B cell (primary cell): ENCODE measurements at regions of chr2 and their contacts with region 1.

Region 1: DNA sequence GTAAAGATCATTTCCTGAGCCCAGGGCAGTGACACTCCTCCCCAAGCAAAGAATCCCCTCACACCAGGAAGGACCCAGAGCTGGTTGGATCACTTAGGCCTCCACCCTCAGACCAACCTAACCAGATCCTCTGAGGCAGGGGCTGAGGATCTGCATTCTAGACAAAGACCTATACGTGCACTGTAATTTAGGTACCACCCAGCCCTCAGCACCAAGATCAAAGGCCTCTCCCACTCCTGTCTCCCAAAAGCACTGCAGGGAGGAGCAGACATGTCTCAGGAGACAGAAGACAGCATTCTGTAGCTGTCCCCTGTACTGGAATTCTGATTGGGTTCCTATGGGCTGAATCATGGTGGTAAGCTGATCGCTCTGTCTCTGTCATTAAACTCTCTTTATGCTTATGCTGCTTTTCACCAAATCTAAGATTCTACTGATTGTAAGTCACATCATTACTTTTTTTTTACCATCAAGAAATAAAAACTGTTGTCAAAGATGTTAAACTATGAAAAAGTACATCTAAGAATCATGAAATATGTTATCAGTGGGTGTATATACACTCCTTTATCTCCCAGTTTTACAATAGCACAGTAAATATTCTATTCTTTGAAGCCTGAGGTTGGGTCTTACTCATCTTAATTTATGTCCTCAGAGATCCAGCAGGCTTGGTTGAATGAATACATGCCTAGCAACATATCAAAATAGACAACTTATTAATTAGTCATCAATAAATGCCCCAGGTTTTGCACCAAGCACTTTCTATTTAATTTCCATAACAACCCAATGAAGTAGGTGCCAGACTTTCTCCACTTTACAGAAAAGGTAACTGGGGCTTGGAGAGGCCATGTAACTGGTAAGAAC is 28.3 kb downstream of the MCFD2 start:
- DNase-seq: no peak
- ATAC-seq: no peak
- H3K4me3 ChIP-seq: no peak overlapping the region
- H3K4me3 Mint-ChIP-seq: no peak overlapping the region
- H3K27ac ChIP-seq: no peak overlapping the region
- H3K27ac Mint-ChIP-seq: no peak overlapping the region
- H3K4me1 ChIP-seq: no peaks in the 10 kb centered on the region
- H3K4me1 Mint-ChIP-seq: no peaks in the 10 kb centered on the region
- H3K27me3 ChIP-seq: peaks cover 0 to 2% (median 0%) of the 10 kb centered on the region in 4 experiments
- H3K27me3 Mint-ChIP-seq: peaks cover 4% of the 10 kb centered on the region
- CTCF ChIP-seq: no peak

Region 2: GRCh38 chr2:44981136-44982108 is 1905.8 kb before region 1 on chr2:
- CTCF ChIA-PET with region 1: no interaction called
- POLR2A ChIA-PET with region 1: no interaction called
- intact Hi-C with region 1: loop called (anchors 5 kb)
- DNase-seq: peak; percentile 77
- ATAC-seq: peak; percentile 36
- H3K4me3 ChIP-seq: no peak overlapping the region
- H3K4me3 Mint-ChIP-seq: no peak overlapping the region
- H3K27ac ChIP-seq: no peak overlapping the region
- H3K27ac Mint-ChIP-seq: no peak overlapping the region
- H3K4me1 ChIP-seq: no peaks in the 10 kb centered on the region
- H3K4me1 Mint-ChIP-seq: peaks cover 2% of the 10 kb centered on the region
- H3K27me3 ChIP-seq: peaks cover 0 to 14% (median 5%) of the 10 kb centered on the region in 4 experiments
- H3K27me3 Mint-ChIP-seq: peaks cover 17% of the 10 kb centered on the region
- CTCF ChIP-seq: peak; percentile 91

Region 3: GRCh38 chr2:45889053-45889452 is 998.2 kb before region 1 on chr2:
- CTCF ChIA-PET with region 1: no interaction called
- POLR2A ChIA-PET with region 1: no interaction called
- intact Hi-C with region 1: no loop called
- DNase-seq: peak; percentile 78
- ATAC-seq: peak; percentile 81
- H3K4me3 ChIP-seq: no peak overlapping the region
- H3K4me3 Mint-ChIP-seq: peak overlapping the region; percentile 73
- H3K27ac ChIP-seq: peak overlapping the region; percentile 0 to 50
- H3K27ac Mint-ChIP-seq: peak overlapping the region; percentile 43
- H3K4me1 ChIP-seq: peaks cover 87 to 91% of the 10 kb centered on the region in 2 donors
- H3K4me1 Mint-ChIP-seq: peaks cover 91% of the 10 kb centered on the region
- H3K27me3 ChIP-seq: no peaks in the 10 kb centered on the region
- H3K27me3 Mint-ChIP-seq: no peaks in the 10 kb centered on the region
- CTCF ChIP-seq: peak; percentile 49

Region 4: DNA sequence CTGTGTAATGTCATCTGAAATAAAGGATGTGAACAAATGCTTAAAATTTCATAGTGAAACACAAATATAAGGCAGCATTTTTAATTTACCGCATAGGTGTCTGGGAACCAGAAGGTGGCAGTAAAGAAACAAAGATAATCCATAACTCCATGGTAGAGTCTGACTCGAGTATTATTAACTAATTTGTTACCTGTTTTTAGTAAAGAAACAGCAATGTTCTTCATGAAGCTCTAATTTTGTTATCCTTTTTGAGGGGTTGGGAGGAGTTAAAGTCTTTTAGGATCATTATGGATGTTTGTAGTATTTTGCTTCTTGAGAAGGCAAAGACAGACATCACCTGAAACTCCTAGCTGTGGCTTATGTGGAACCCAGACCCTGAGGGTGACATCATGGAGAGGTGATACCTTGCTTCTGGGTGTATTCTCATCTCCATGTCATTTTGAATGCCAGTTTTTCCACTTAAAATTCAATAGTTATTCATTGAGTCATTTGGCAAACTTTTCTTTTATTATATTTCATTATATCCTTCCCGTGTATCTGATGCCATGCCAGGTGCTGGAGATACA is 876.2 kb before region 1 on chr2:
- CTCF ChIA-PET with region 1: no interaction called
- POLR2A ChIA-PET with region 1: no interaction called
- intact Hi-C with region 1: loop called (anchors 5 kb)
- DNase-seq: peak; percentile 24
- ATAC-seq: no peak
- H3K4me3 ChIP-seq: no peak overlapping the region
- H3K4me3 Mint-ChIP-seq: no peak overlapping the region
- H3K27ac ChIP-seq: no peak overlapping the region
- H3K27ac Mint-ChIP-seq: no peak overlapping the region
- H3K4me1 ChIP-seq: no peaks in the 10 kb centered on the region
- H3K4me1 Mint-ChIP-seq: no peaks in the 10 kb centered on the region
- H3K27me3 ChIP-seq: no peaks in the 10 kb centered on the region
- H3K27me3 Mint-ChIP-seq: no peaks in the 10 kb centered on the region
- CTCF ChIP-seq: peak; percentile 60

Region 5: DNA sequence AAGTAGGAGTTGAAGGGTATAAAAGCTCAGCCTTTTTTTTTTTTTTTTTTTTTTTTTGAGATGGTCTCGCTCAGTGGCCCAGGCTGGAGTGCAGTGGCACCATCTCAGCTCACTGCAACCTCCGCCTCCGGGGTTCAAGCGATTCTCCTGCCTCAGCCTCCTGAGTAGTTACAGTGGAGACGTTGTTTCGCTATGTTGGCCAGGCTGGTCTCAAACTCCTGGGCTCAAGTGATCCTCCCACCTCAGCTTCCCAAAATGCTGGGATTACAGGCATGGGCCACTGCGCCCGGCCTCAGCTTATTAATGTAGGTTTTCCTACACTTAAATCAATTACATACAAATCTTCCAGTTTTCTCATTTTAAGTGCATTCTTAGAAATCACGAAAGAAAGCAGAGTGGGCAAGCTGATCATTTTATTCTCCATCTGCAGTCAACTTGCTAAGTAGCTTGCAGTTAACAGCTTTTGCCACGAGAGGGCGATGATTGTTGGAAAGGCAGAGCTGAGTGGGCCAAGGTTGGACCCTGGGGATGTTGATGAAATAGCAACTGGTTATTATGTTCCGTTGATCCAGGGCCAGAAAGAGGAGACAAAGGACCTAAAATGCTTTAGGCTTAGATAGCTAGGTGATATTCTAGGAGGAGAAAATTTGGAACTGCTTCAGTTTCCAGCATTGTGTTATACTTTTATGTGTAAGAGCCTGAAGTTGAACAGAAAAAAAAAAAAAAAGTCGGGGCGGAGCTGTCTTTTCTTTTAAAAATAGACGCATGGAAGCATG is 824.4 kb before region 1 on chr2:
- CTCF ChIA-PET with region 1: no interaction called
- POLR2A ChIA-PET with region 1: no interaction called
- intact Hi-C with region 1: loop called (anchors 5 kb)
- DNase-seq: peak; percentile 68
- ATAC-seq: peak; percentile 49
- H3K4me3 ChIP-seq: no peak overlapping the region
- H3K4me3 Mint-ChIP-seq: no peak overlapping the region
- H3K27ac ChIP-seq: no peak overlapping the region
- H3K27ac Mint-ChIP-seq: no peak overlapping the region
- H3K4me1 ChIP-seq: no peaks in the 10 kb centered on the region
- H3K4me1 Mint-ChIP-seq: no peaks in the 10 kb centered on the region
- H3K27me3 ChIP-seq: no peaks in the 10 kb centered on the region
- H3K27me3 Mint-ChIP-seq: no peaks in the 10 kb centered on the region
- CTCF ChIP-seq: peak; percentile 80

Region 6: GRCh38 chr2:46461011-46461674 is 426.1 kb before region 1 on chr2:
- CTCF ChIA-PET with region 1: interaction called, 3 read pairs
- POLR2A ChIA-PET with region 1: no interaction called
- intact Hi-C with region 1: loop called (anchors 1 kb)
- DNase-seq: peak; percentile 82
- ATAC-seq: peak; percentile 79
- H3K4me3 ChIP-seq: peak overlapping the region in 3 of 5 experiments; percentile 16 to 24 (median 20)
- H3K4me3 Mint-ChIP-seq: peak overlapping the region; percentile 70
- H3K27ac ChIP-seq: peak overlapping the region; percentile 2 to 55
- H3K27ac Mint-ChIP-seq: peak overlapping the region; percentile 77
- H3K4me1 ChIP-seq: peaks cover 13 to 21% of the 10 kb centered on the region in 2 donors
- H3K4me1 Mint-ChIP-seq: peaks cover 21% of the 10 kb centered on the region
- H3K27me3 ChIP-seq: no peaks in the 10 kb centered on the region
- H3K27me3 Mint-ChIP-seq: peaks cover 7% of the 10 kb centered on the region
- CTCF ChIP-seq: peak; percentile 98

Region 7: DNA sequence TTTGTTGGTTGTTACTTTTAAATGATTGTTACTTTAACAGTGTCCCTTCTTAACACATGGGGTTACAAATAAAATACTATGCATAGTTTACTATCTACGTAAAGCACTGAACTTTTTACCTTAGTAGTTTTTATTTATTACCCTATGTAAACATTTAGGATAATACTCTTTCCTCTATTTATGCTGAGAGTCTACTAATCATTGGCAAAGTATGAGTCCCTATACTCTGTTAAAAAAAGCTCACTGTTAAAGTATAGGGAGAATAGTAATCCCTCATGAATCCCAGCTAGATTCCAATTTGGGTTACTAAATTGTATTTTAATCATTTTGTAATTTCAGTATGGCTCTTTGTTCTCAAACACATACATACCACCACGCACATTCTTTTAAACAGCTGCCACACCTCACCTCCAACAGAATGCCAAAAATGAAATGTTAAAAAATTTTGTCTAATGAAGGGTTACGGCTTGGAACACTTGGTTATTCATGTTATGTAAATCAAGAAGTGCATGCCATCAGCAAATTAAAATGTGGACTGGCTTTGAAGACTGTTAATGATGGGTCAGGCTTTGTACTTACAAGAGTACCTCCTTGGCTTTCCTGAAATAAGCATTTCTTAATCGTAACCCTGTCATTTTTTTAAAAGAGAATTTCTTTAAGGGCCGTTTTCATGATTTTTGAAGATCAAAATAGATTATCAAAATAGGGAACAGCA is 303.0 kb before region 1 on chr2:
- CTCF ChIA-PET with region 1: no interaction called
- POLR2A ChIA-PET with region 1: no interaction called
- intact Hi-C with region 1: no loop called
- DNase-seq: no peak
- ATAC-seq: no peak
- H3K4me3 ChIP-seq: no peak overlapping the region
- H3K4me3 Mint-ChIP-seq: no peak overlapping the region
- H3K27ac ChIP-seq: peak overlapping the region in 1 of 2 donors; percentile 14
- H3K27ac Mint-ChIP-seq: no peak overlapping the region
- H3K4me1 ChIP-seq: no peaks in the 10 kb centered on the region
- H3K4me1 Mint-ChIP-seq: peaks cover 5% of the 10 kb centered on the region
- H3K27me3 ChIP-seq: no peaks in the 10 kb centered on the region
- H3K27me3 Mint-ChIP-seq: no peaks in the 10 kb centered on the region
- CTCF ChIP-seq: no peak

Region 8: DNA sequence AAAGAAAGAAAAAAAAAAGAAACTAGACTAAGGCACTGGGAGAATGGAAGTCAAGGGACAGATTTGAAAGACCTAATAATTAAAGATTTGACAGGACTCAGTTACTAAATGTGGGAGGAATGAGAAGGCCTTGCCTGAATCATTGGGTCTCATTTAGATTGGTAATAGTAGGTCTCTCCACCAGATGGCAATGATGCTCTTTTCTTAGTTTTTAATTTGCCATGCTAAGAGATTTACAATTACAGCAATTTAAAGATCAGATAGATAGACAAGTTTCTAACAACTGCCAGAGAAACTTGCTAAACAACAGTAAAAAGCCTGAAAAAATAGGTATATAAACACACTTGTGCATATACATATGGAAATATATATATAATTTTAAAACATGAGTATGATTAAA is 254.9 kb before region 1 on chr2:
- CTCF ChIA-PET with region 1: interaction called, 3 read pairs
- POLR2A ChIA-PET with region 1: no interaction called
- intact Hi-C with region 1: loop called (anchors 1 kb)
- DNase-seq: peak; percentile 44
- ATAC-seq: no peak
- H3K4me3 ChIP-seq: no peak overlapping the region
- H3K4me3 Mint-ChIP-seq: no peak overlapping the region
- H3K27ac ChIP-seq: no peak overlapping the region
- H3K27ac Mint-ChIP-seq: no peak overlapping the region
- H3K4me1 ChIP-seq: no peaks in the 10 kb centered on the region
- H3K4me1 Mint-ChIP-seq: peaks cover 7% of the 10 kb centered on the region
- H3K27me3 ChIP-seq: no peaks in the 10 kb centered on the region
- H3K27me3 Mint-ChIP-seq: no peaks in the 10 kb centered on the region
- CTCF ChIP-seq: peak; percentile 61

Region 9: DNA sequence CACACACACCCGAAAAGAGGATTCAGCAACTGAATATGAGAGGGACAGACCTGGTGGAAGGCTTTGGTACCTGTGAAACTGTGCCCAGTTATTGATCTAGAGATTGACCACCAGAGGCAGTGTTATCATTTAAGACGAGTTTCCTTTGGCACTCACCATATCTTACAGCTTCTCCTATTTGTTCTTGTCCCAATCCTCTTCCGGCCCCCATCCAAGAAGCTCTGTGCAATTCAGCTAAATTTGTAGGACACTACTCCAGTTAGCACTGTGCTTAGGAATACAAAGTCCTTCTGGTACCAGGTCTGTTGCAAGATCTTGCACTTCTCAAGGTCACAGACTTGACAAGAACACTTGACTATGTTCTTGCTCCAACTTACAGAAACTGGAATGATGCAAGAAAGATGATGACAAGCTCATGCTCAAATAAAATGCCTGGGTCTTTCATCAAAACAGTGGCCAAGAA is 230.2 kb before region 1 on chr2:
- CTCF ChIA-PET with region 1: interaction called, 22 read pairs
- POLR2A ChIA-PET with region 1: no interaction called
- intact Hi-C with region 1: loop called (anchors 5 kb)
- DNase-seq: peak; percentile 50
- ATAC-seq: no peak
- H3K4me3 ChIP-seq: no peak overlapping the region
- H3K4me3 Mint-ChIP-seq: no peak overlapping the region
- H3K27ac ChIP-seq: no peak overlapping the region
- H3K27ac Mint-ChIP-seq: no peak overlapping the region
- H3K4me1 ChIP-seq: peaks cover 3% of the 10 kb centered on the region in 2 donors
- H3K4me1 Mint-ChIP-seq: peaks cover 6% of the 10 kb centered on the region
- H3K27me3 ChIP-seq: peaks cover 0 to 2% (median 0%) of the 10 kb centered on the region in 4 experiments
- H3K27me3 Mint-ChIP-seq: peaks cover 6% of the 10 kb centered on the region
- CTCF ChIP-seq: peak; percentile 62

Region 10: DNA sequence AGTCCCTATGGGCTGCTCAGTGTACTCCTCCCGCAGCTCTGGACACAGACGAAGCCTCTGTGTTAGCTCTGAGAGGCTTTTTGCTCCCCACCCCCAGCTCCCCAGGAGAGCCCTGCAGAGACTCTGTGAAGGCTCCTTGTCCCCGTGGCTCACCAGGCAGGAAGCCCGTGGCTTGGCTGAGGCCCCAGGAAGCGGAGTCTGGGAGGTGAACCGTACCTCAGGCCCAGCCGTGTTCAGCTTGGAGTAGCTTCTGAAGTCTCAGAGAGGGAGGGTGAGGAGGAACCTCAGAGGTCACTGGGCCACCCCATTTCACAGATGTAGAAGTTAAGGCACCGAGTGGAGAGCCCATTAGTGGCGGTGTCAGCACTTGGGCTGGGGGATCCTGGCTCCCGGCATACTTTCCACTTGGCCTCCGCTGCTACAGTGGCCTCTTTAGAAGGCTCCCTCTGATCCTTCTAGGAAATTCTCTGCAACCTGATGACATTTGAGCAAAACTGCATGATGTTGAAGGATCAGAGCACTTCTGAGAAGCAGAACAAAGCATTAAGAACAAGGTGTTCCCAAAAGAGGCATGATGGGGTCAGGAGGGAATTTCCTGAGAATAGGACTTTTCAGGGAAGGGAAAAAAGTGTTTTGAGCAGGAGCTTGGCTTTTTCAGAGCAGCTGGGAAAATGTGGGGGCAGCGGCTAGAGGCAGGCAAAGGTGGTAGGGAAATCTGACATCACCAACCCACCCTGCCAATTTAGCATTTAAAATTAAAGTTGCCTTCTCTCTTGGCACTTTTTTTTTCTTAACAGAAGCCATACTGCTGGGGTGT is 50.8 kb before region 1 on chr2:
- CTCF ChIA-PET with region 1: no interaction called
- POLR2A ChIA-PET with region 1: no interaction called
- intact Hi-C with region 1: no loop called
- DNase-seq: no peak
- ATAC-seq: no peak
- H3K4me3 ChIP-seq: no peak overlapping the region
- H3K4me3 Mint-ChIP-seq: no peak overlapping the region
- H3K27ac ChIP-seq: no peak overlapping the region
- H3K27ac Mint-ChIP-seq: no peak overlapping the region
- H3K4me1 ChIP-seq: peaks cover under 1 to 1% of the 10 kb centered on the region in 2 donors
- H3K4me1 Mint-ChIP-seq: peaks cover 2% of the 10 kb centered on the region
- H3K27me3 ChIP-seq: no peaks in the 10 kb centered on the region
- H3K27me3 Mint-ChIP-seq: peaks cover 5% of the 10 kb centered on the region
- CTCF ChIP-seq: no peak

Region 11: DNA sequence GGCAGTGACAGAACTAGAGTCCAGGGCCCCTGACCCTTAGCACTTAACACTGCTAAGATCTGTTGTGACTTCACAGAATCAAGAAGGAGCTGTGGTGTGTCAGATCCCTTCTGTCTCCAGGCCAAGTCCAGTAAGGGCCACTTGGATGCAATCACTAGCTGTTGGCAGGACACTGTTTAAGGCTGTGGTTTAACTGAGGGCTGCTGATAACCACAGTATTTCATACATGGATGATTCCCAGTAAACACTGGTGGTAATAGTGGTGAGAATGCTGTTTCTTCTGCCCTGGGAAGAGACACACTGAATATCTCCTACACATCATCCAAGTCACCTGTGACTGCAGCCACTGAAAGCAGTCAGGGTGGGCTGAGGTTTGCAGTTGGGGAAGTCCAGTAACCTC is 1096.8 kb after region 1 on chr2:
- CTCF ChIA-PET with region 1: no interaction called
- POLR2A ChIA-PET with region 1: no interaction called
- intact Hi-C with region 1: no loop called
- DNase-seq: no peak
- ATAC-seq: no peak
- H3K4me3 ChIP-seq: no peak overlapping the region
- H3K4me3 Mint-ChIP-seq: no peak overlapping the region
- H3K27ac ChIP-seq: no peak overlapping the region
- H3K27ac Mint-ChIP-seq: no peak overlapping the region
- H3K4me1 ChIP-seq: peaks cover 2 to 3% of the 10 kb centered on the region in 2 donors
- H3K4me1 Mint-ChIP-seq: peaks cover 10% of the 10 kb centered on the region
- H3K27me3 ChIP-seq: no peaks in the 10 kb centered on the region
- H3K27me3 Mint-ChIP-seq: peaks cover 3% of the 10 kb centered on the region
- CTCF ChIP-seq: no peak